IMR-90 (cell line): ENCODE measurements at regions of chr11 and their contacts with region 1.

Region 1: DNA sequence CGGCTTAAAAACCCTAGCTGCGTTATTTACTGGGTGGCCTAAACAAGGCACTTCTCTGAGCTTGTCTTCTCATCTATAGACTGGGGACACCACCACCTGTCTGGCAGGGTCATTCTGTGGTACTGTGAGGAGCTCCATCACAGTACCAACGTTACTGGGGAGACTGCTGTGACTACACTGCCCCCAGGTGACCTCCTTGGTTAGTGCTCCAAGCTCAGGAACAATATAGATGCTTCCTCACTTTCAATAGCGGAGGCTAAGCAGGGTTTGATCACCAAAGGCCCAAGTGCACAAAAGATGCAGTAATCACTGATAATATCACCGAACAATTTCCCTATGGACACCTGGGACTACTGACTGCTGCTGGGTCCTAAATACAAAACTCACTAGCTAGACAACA is 18.8 kb downstream of the PRPF19 start:
- DNase-seq: peak; percentile 61
- ATAC-seq: peak; percentile 97
- H3K4me3 ChIP-seq: no peak overlapping the region
- H3K27ac ChIP-seq: no peak overlapping the region
- H3K4me1 ChIP-seq: no peaks in the 10 kb centered on the region
- H3K27me3 ChIP-seq: no peaks in the 10 kb centered on the region
- CTCF ChIP-seq: peak; percentile 75
- POLR2A ChIP-seq: no peak
- RAD21 ChIP-seq: peak; percentile 89

Region 2: GRCh38 chr11:60775420-60775961 is 112.1 kb before region 1 on chr11:
- CTCF ChIA-PET with region 1: interaction called, 16 read pairs
- POLR2A ChIA-PET with region 1: no interaction called
- dilution Hi-C with region 1: no loop called
- in situ Hi-C with region 1: no loop called
- intact Hi-C with region 1: loop called (anchors 1 kb)
- DNase-seq: peak; percentile 86
- ATAC-seq: peak; percentile 97
- H3K4me3 ChIP-seq: no peak overlapping the region
- H3K27ac ChIP-seq: no peak overlapping the region
- H3K4me1 ChIP-seq: no peaks in the 10 kb centered on the region; the same call in 1 of the 2 replicates
- H3K27me3 ChIP-seq: peaks cover 7% of the 10 kb centered on the region
- CTCF ChIP-seq: peak; percentile 93
- POLR2A ChIP-seq: no peak
- RAD21 ChIP-seq: peak; percentile 87

Region 3: DNA sequence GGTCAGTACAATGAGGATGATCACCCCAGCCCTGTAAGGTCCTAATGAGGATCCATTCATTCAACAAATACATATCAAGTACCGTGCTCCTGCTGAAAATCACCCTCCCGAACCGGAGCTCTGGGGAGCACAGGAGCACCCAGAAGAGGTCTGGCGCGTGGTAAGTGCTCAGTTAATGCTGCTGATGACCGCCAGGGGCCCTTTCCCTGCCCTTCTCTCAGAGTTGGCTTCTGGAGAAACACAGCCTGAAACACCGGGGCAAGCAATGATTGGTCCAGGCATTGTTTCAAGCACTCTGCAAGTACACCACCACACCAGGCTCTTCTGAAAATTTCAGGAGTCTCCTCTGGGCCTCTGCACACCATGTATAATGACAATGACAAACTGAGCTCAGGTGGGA is 49.4 kb before region 1 on chr11:
- CTCF ChIA-PET with region 1: interaction called, 86 read pairs
- POLR2A ChIA-PET with region 1: no interaction called
- dilution Hi-C with region 1: no loop called
- in situ Hi-C with region 1: loop called (anchors 5 kb)
- intact Hi-C with region 1: loop called (anchors 2 kb)
- DNase-seq: peak; percentile 28
- ATAC-seq: 0 out of 2 replicates have a peak, but pooled peaks have one; percentile 19
- H3K4me3 ChIP-seq: no peak overlapping the region
- H3K27ac ChIP-seq: no peak overlapping the region
- H3K4me1 ChIP-seq: peaks cover 11% of the 10 kb centered on the region
- H3K27me3 ChIP-seq: peaks cover 18% of the 10 kb centered on the region
- CTCF ChIP-seq: peak; percentile 34
- POLR2A ChIP-seq: no peak
- RAD21 ChIP-seq: no peak

Region 4: GRCh38 chr11:60872961-60873524 is 14.5 kb before region 1 on chr11:
- CTCF ChIA-PET with region 1: interaction called, 11 read pairs
- POLR2A ChIA-PET with region 1: no interaction called
- dilution Hi-C with region 1: no loop called
- in situ Hi-C with region 1: no loop called
- intact Hi-C with region 1: no loop called
- DNase-seq: peak; percentile 89
- ATAC-seq: peak; percentile 91
- H3K4me3 ChIP-seq: no peak overlapping the region
- H3K27ac ChIP-seq: peak overlapping the region; percentile 33
- H3K4me1 ChIP-seq: peaks cover 22% of the 10 kb centered on the region
- H3K27me3 ChIP-seq: no peaks in the 10 kb centered on the region; the same call in none of the 2 replicates
- CTCF ChIP-seq: no peak
- POLR2A ChIP-seq: no peak
- RAD21 ChIP-seq: no peak

Region 5: DNA sequence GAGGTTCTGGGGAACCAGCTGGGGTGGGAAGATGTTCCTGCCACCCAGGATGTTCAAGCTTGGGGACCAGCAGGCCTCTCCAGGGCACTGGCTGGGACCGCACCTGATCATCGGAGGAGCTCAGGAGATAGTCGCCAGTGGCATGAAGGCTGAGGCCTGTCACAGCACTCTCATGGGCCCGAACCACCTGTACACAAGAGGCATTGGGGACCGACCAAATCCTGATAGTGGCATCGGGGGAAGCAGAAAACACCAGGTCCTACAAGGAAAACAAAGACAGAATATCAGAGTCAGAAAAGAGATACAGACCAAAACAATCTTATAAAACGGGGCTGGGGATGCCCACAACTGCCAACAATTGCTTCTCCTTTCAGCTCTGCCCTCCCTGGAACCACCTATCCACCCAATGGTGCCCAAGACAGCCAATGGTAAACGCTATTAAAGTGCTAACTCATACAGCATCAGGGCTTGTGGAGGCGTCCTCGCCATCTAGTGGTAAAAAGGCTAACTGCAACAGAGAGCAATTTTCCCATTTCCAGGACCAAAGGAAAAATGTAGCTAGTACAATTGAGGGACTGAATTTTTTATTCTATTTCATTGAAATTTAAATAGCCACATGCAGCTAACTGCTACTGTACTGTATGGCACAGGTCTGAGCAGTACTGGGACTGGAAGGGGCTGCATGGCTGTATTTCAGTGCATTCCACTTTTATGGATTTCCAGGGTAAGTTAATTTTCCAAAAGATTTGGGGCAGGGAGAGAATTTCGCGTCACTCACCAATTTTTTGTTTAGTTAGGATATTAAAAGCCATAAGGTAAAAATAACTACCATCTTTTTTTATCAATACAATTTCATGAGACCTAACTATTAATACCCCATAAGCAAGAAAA is 11.7 kb after region 1 on chr11:
- CTCF ChIA-PET with region 1: interaction called, 15 read pairs
- POLR2A ChIA-PET with region 1: no interaction called
- dilution Hi-C with region 1: no loop called
- in situ Hi-C with region 1: no loop called
- intact Hi-C with region 1: no loop called
- DNase-seq: peak; percentile 73
- ATAC-seq: peak; percentile 99
- H3K4me3 ChIP-seq: no peak overlapping the region
- H3K27ac ChIP-seq: no peak overlapping the region
- H3K4me1 ChIP-seq: no peaks in the 10 kb centered on the region
- H3K27me3 ChIP-seq: no peaks in the 10 kb centered on the region
- CTCF ChIP-seq: peak; percentile 93
- POLR2A ChIP-seq: no peak
- RAD21 ChIP-seq: peak; percentile 76